Heart right ventricle (tissue), 16 donors: ENCODE measurements at regions of chr1 and their contacts with region 1.

Region 1: GRCh38 chr1:226973898-226974543 is 33.9 kb downstream of the COQ8A start:
- DNase-seq: peak in 1 of 2 donors; percentile 45
- ATAC-seq: peak; percentile 25 to 77 (median 67)
- H3K4me3 ChIP-seq: no peak overlapping the region
- H3K27ac ChIP-seq: peak overlapping the region; percentile 83 to 96 (median 92)
- H3K4me1 ChIP-seq: peaks cover 20 to 57% (median 38%) of the 10 kb centered on the region in 9 donors
- H3K27me3 ChIP-seq: no peaks in the 10 kb centered on the region
- CTCF ChIP-seq: no peak

Region 2: DNA sequence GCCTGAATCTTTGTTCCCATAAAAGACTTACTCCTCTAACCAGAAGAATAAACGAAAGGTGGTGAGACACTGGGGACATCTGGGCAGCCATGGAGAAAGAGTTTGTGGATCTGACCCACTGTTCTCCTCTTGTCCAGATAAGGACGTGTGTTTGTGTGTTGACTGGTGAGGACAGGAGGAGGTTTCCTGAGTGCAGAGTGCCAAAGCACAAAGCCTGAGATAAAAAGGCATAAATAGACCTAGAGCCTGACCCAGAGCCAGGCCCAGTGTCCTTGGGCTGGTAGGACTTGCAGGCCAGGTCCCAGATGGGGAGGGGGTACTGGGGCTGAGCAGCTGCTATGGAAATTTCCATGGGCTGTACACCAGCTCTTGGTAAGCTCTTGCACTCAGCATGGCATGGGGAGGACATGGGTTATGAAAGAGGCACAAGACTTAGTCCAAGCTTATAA is 53.6 kb before region 1 on chr1:
- intact Hi-C with region 1: loop called in 5 of 10 experiments (anchors 5 to 10 kb)
- DNase-seq: peak; percentile 71 to 78
- ATAC-seq: peak; percentile 92 to 98 (median 94)
- H3K4me3 ChIP-seq: no peak overlapping the region
- H3K27ac ChIP-seq: peak overlapping the region; percentile 79 to 89 (median 87)
- H3K4me1 ChIP-seq: peaks cover 0 to 36% (median 11%) of the 10 kb centered on the region in 9 donors
- H3K27me3 ChIP-seq: no peaks in the 10 kb centered on the region
- CTCF ChIP-seq: no peak